ENCODE measurements at regions of chr19 and their contacts with region 1.

Region 1: GRCh38 chr19:18117692-18118378 is 20.3 kb downstream of the MAST3 start:
- DNase-seq: peak; percentile 52 to 73
- H3K4me3 ChIP-seq: peak overlapping the region; percentile 75 to 80 (median 78)
- H3K27ac ChIP-seq: peak overlapping the region; percentile 67 to 69
- H3K4me1 ChIP-seq: peaks cover 0 to 8% of the 10 kb centered on the region in 2 donors
- H3K27me3 ChIP-seq: no peaks in the 10 kb centered on the region
- CTCF ChIP-seq: no peak
- POLR2A ChIP-seq: no peak

Region 2: GRCh38 chr19:18141031-18141430 is 23.2 kb after region 1 on chr19:
- intact Hi-C with region 1: loop called (anchors 1 kb)
- DNase-seq: no peak
- H3K4me3 ChIP-seq: no peak overlapping the region
- H3K27ac ChIP-seq: no peak overlapping the region
- H3K4me1 ChIP-seq: no peaks in the 10 kb centered on the region
- H3K27me3 ChIP-seq: no peaks in the 10 kb centered on the region
- CTCF ChIP-seq: no peak
- POLR2A ChIP-seq: no peak

Region 3: DNA sequence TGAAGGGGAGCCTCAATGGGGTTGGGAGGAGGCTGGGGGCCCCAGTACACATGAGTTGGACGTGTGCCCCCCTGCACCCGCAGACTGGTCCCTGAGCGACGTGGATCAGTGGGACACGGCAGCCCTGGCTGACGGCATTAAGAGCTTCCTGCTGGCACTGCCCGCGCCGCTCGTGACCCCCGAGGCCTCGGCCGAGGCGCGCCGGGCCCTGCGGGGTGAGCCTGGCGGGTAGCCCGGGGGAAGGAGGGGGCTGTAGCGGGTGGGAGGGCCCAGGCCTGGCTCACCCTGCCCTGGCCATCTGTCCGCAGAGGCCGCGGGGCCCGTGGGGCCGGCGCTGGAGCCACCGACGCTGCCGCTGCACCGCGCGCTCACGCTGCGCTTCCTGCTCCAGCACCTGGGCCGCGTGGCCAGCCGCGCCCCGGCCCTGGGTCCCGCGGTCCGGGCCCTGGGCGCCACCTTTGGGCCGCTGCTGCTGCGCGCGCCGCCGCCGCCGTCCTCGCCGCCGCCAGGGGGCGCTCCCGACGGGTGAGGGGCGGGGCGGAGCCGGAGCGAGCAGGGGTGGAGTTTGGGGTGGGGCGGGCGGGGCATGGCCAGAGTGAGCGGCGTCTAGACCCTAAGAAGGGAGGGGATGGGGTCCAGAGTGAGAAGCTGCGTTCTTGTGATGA is 43.3 kb after region 1 on chr19:
- intact Hi-C with region 1: loop called (anchors 10 kb)
- DNase-seq: peak in 1 of 2 donors; percentile 54
- H3K4me3 ChIP-seq: peak overlapping the region; percentile 40 to 66 (median 52)
- H3K27ac ChIP-seq: peak overlapping the region; percentile 81 to 85
- H3K4me1 ChIP-seq: peaks cover 8 to 15% of the 10 kb centered on the region in 2 donors
- H3K27me3 ChIP-seq: no peaks in the 10 kb centered on the region
- CTCF ChIP-seq: peak in 1 of 3 donors; percentile 58
- POLR2A ChIP-seq: no peak

Measured in breast epithelium (tissue), 4 donors.